ENCODE measurements at regions of chr11 and their contacts with region 1.

Region 1: DNA sequence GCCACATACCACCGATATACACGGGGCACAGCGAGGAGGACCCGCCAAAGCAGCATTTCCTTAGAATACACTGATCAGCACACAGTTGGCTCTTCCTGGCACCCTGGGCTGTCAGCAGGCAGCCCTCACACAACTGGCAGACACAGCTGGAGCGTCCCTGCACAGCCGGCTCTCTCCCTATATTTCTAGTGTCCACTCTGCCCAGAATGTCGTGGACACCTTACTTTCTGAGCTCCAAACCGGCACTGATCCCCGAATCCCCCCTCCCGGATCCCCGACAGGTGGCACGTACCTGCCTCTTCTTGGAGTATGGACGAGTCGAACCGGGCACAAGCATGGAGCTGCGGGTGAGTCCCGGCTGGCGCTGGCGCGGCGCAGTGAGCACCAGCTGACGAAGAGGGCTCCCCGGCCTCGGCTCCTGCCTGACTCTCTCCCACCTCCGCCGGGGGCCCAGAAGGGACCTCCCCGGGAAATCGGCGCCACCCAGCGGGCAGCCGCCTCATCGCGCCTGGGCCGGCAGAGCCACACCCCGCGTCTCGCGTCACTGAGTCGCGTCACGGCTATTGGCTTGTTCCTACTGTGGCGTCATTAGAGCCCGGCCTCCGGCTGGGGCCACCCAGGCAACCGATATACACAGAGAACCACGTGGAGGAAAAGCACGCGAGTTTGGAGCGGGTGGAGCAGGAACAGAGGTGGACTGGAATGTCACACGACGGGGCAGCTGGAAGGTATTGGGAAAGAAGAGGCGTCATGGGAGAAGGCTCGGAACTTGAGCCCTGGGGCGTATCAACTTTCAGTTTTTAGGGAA is at the start of gene USP2:
- DNase-seq: peak; percentile 95
- H3K4me3 Mint-ChIP-seq: no peak within 1 kb of the TSS
- H3K27ac Mint-ChIP-seq: no peak within 1 kb of the TSS
- H3K4me1 Mint-ChIP-seq: no peaks in the 10 kb centered on the region
- H3K27me3 Mint-ChIP-seq: peaks cover 8% of the 10 kb centered on the region
- total RNA-seq, gene USP2: 0.22 and 0.36 TPM in 2 replicates

Region 2: DNA sequence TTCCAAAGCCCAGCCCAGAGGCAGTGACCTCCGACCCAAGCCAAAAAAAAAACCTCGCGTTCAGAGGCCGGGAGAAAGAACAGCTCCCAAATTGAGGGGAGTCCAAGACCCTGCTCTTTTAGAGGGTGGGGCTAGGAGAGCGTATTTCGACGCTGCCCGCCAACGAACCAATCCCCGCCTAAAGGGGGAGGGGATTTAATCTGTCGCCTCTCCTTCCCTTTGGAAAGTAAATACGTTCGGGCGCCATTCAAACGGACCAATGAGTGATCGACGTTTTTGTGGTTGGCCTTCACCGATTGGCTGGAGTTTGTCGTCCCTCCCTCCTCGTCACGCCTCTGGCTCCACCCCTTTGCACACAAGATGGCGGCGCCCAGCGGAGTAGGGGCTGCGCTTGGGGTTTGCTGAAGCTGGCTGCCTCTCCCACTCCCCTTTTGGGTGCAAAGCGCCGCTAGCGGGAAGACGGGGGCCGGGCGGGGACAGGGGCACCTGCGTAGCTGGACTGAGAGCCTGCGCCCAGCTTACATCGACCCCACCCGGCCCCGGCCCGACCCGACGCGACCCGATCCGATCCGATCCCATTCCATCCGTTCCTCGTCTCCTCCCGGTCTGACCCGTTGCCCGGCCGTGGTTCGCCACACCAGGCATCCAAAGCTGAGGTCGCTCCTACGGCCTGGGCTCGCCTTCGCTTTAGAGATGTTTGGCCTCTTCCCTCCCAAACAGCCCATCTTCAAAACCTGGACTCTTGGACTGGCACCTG is 47.0 kb before region 1 on chr11 and contains the start of gene RNF26:
- intact Hi-C with region 1: loop called (anchors 1 kb)
- DNase-seq: peak; percentile 93
- H3K4me3 Mint-ChIP-seq: peak within 1 kb of the TSS; percentile 97
- H3K27ac Mint-ChIP-seq: peak within 1 kb of the TSS; percentile 96
- H3K4me1 Mint-ChIP-seq: peaks cover 53% of the 10 kb centered on the region
- H3K27me3 Mint-ChIP-seq: peaks cover 25% of the 10 kb centered on the region
- total RNA-seq, gene RNF26: 26.1 and 27.9 TPM in 2 replicates

Region 3: GRCh38 chr11:119356349-119357031 is 24.9 kb before region 1 on chr11:
- intact Hi-C with region 1: loop called (anchors 1 kb)
- DNase-seq: peak; percentile 61
- H3K4me3 Mint-ChIP-seq: peak overlapping the region; percentile 84
- H3K27ac Mint-ChIP-seq: peak overlapping the region; percentile 69
- H3K4me1 Mint-ChIP-seq: peaks cover 18% of the 10 kb centered on the region
- H3K27me3 Mint-ChIP-seq: peaks cover 61% of the 10 kb centered on the region

Region 4: GRCh38 chr11:119363851-119364590 is 17.4 kb before region 1 on chr11:
- intact Hi-C with region 1: loop called (anchors 1 kb)
- DNase-seq: peak; percentile 58
- H3K4me3 Mint-ChIP-seq: no peak overlapping the region
- H3K27ac Mint-ChIP-seq: no peak overlapping the region
- H3K4me1 Mint-ChIP-seq: peaks cover 20% of the 10 kb centered on the region
- H3K27me3 Mint-ChIP-seq: peaks cover 53% of the 10 kb centered on the region

Region 5: DNA sequence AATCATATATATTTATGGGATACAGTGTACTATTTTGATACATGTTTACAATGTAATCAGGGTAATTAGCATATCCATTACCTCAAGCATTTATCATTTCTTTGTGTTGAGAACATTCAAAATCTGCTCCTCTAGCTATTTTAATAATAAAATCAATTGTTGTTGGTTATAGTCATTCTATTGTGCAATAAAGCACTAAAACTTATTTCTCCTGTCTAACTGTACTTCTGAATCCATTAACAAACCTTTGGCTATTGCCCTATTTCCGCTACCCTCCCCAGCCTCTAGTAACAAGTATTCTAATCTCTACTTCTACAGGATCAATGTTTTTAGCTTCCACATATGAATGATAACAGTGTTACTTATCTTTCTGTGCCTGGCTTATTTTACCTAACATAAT is 15.4 kb after region 1 on chr11:
- intact Hi-C with region 1: no loop called
- DNase-seq: no peak
- H3K4me3 Mint-ChIP-seq: no peak overlapping the region
- H3K27ac Mint-ChIP-seq: no peak overlapping the region
- H3K4me1 Mint-ChIP-seq: no peaks in the 10 kb centered on the region
- H3K27me3 Mint-ChIP-seq: peaks cover 26% of the 10 kb centered on the region

Region 6: DNA sequence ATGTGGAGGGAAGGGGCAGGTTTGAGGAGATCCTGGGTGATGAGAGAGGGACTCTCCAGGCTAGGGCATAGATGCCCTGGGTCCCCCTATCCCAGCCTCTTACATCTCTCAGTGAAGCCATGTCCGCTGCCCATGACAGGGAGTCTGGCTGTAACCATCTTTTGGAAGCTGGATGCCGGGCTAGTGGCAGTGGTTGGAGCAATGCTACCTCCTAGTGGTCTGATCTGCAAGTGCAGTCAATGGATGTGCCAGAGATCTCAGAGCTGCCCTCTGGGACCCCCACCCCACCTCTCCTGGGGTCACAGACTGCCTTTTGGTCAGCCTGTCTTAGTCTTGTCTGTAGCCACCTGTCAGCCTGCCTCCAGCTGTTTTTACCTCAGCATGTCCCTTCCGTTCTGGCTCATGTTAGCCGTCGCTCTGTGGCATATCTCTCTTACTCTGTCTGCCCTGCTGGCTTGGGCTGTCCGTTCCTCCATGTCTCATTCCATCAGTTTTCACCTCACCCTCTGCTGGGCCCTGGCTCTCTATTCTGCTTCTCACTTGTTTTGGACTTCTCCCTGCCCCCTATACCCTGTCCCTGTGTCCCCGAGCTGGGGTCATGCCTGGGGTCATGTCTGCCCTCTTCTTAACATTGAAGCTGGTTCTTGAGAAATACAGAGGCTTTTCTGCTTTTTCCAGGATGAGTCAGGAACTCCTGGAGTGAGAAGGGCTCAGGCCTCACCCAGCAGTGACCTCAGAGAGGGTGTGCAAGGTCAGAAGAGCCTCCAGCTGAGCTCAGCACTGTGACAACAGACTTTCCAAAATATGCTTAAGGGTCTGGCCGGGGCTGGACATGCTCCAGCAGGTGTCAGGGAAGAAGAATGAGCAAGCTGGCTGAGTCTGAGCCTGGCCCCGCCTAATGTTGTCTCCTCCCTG is 93.6 kb after region 1 on chr11:
- intact Hi-C with region 1: loop called (anchors 1 kb)
- DNase-seq: peak; percentile 16
- H3K4me3 Mint-ChIP-seq: no peak overlapping the region
- H3K27ac Mint-ChIP-seq: no peak overlapping the region
- H3K4me1 Mint-ChIP-seq: no peaks in the 10 kb centered on the region
- H3K27me3 Mint-ChIP-seq: peaks cover 8% of the 10 kb centered on the region

Measured in activated T-helper 1 cell treated with anti-CD3 and anti-CD28 coated beads, Interleukin-12 subunit alpha, Interleukin-12 subunit beta, Interleukin-2, Interleukin-4 antibody, amounts not matched to agents 30 ng/mL and 10 ng/mL and 1 ng/mL, durations not matched to agents 14 hours and 24 hours and 36 hours (primary cell).